ENCODE measurements at regions of chr10 and their contacts with region 1.

Region 1: DNA sequence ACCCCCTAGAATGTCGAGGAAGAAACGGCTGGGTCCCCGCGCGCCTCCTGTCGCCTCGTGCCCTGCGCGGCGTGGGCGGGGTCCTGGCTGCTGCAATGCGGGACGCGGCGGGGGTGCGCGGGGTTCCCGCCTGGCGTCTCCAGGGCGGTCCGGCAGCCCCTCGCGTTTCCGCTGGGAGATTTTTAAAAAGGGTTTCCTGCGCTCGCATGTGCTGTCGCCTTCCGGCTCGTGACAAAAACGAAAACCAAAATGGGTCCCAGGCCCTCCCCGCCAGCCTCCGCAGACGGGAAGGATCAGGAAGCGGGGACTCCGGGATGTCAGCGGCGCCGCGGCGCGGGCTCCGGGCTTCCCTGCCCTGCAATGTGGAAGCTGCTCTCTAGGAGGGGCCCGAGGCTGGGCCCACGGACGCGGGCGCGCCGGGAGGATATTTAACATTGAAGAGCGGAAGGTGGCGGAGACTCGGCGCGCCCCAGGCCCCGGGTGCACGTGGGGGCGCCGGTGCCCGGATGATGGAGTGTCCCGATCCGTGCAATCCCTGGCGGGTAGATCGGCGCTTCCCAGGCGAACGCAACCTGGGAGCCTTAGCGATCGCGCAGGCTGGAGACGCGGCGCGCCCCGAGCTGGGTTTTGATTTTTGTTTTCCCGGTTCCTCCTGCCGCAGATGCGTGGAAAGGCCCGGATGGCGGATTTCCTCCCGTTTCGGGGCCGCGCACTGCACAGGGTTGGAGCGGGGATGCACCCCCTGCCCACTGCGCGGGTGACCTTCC is 1.0 kb downstream of the PFKP start:
- DNase-seq: peak; percentile 42 to 71
- ATAC-seq: peak; percentile 41 to 64 (median 55)
- H3K4me3 ChIP-seq: peak overlapping the region; percentile 90
- H3K4me3 Mint-ChIP-seq: peak overlapping the region; percentile 97
- H3K27ac ChIP-seq: no peak overlapping the region
- H3K27ac Mint-ChIP-seq: peak overlapping the region in 1 of 2 donors; percentile 77
- H3K4me1 ChIP-seq: peaks cover 16% of the 10 kb centered on the region
- H3K4me1 Mint-ChIP-seq: peaks cover 29 to 33% of the 10 kb centered on the region in 2 donors
- H3K27me3 ChIP-seq: peaks cover 5% of the 10 kb centered on the region
- H3K27me3 Mint-ChIP-seq: no peaks in the 10 kb centered on the region
- CTCF ChIP-seq: no peak

Region 2: GRCh38 chr10:2145926-2146478 is 922.4 kb before region 1 on chr10:
- intact Hi-C with region 1: no loop called
- DNase-seq: no peak
- ATAC-seq: no peak
- H3K4me3 ChIP-seq: no peak overlapping the region
- H3K4me3 Mint-ChIP-seq: no peak overlapping the region
- H3K27ac ChIP-seq: no peak overlapping the region
- H3K27ac Mint-ChIP-seq: no peak overlapping the region
- H3K4me1 ChIP-seq: no peaks in the 10 kb centered on the region
- H3K4me1 Mint-ChIP-seq: no peaks in the 10 kb centered on the region
- H3K27me3 ChIP-seq: no peaks in the 10 kb centered on the region
- H3K27me3 Mint-ChIP-seq: no peaks in the 10 kb centered on the region
- CTCF ChIP-seq: no peak

Region 3: DNA sequence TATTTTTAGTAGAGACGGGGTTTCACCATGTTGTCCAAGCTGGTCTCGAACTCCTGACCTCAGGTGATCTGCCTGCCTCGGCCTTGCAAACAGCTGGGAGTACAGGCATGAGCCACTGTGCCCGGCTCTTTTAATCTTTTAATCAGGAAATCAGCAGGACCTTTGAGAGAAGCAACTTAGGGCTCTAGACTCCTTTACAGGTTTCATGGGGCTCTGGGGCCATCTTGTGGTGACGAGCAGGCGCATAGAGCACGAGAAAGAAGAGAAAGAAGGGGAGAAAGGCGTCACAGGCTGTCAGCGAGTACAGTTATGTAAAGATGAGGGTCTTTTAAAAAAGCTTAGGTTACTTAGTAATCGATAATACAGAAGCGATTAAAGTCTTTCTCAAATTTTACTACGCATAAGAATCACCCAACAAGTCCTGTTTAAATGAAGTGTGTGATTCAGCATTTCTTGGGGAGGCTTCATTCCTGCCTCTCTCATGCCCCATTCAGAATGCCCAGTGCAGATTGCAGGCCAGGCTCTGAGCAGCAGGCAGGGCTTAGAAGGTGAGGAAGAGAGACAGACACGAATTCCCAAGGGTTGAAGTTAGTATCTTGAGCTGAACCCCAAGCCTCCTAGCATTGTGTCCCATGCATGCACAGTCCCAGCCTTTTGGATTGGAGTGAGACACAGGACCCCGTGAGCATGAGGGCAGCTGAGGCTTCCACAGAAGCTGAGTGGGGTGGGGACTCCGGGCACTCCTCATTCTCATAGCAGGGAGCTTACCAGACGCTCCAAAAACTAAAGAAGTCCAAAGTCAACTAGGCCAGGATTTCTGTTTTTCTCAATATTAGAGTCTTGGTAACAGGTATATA is 24.6 kb before region 1 on chr10:
- intact Hi-C with region 1: no loop called
- DNase-seq: peak in 1 of 2 donors; percentile 69
- ATAC-seq: peak in 2 of 3 donors; percentile 60 to 64
- H3K4me3 ChIP-seq: no peak overlapping the region
- H3K4me3 Mint-ChIP-seq: no peak overlapping the region
- H3K27ac ChIP-seq: no peak overlapping the region
- H3K27ac Mint-ChIP-seq: no peak overlapping the region
- H3K4me1 ChIP-seq: no peaks in the 10 kb centered on the region
- H3K4me1 Mint-ChIP-seq: peaks cover 0 to 6% of the 10 kb centered on the region in 2 donors
- H3K27me3 ChIP-seq: no peaks in the 10 kb centered on the region
- H3K27me3 Mint-ChIP-seq: peaks cover 5 to 9% of the 10 kb centered on the region in 2 donors
- CTCF ChIP-seq: peak; percentile 41

Region 4: GRCh38 chr10:3095373-3096139 is 27.2 kb after region 1 on chr10:
- intact Hi-C with region 1: loop called (anchors 2 kb)
- DNase-seq: peak; percentile 41 to 64
- ATAC-seq: peak; percentile 69 to 83 (median 73)
- H3K4me3 ChIP-seq: no peak overlapping the region
- H3K4me3 Mint-ChIP-seq: peak overlapping the region; percentile 79
- H3K27ac ChIP-seq: peak overlapping the region; percentile 32
- H3K27ac Mint-ChIP-seq: peak overlapping the region; percentile 82 to 88
- H3K4me1 ChIP-seq: peaks cover 39% of the 10 kb centered on the region
- H3K4me1 Mint-ChIP-seq: peaks cover 53 to 60% of the 10 kb centered on the region in 2 donors
- H3K27me3 ChIP-seq: no peaks in the 10 kb centered on the region
- H3K27me3 Mint-ChIP-seq: no peaks in the 10 kb centered on the region
- CTCF ChIP-seq: no peak